Panc1 (cell line): ENCODE measurements at regions of chr13 and their contacts with region 1.

Region 1: DNA sequence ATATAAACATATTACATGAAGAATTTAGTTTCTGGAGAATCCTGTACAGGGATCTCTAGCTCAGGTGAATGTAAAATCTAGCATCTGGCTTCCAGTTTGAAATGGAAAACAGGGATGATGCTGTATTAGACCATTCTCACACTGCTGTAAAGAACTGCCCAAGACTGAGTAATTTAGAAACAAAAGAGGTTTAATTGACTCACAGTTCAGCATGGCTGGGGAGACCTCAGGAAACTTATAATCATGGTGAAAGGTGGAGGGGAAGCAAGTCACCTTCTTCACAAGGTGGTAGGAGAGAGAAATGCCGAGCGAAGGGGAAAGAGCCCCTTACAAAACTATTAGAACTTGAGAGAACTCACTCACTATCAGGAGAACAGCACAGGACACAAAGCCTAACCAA is 17.0 kb upstream of the N4BP2L2 start:
- DNase-seq: no peak
- ATAC-seq: no peak
- H3K4me3 ChIP-seq: no peak overlapping the region
- H3K27ac ChIP-seq: no peak overlapping the region
- H3K4me1 ChIP-seq: no peaks in the 10 kb centered on the region
- H3K27me3 ChIP-seq: no peaks in the 10 kb centered on the region
- CTCF ChIP-seq: no peak

Region 2: GRCh38 chr13:32415019-32415418 is 140.6 kb before region 1 on chr13:
- CTCF ChIA-PET with region 1: no interaction called
- POLR2A ChIA-PET with region 1: no interaction called
- in situ Hi-C with region 1: no loop called
- intact Hi-C with region 1: no loop called
- DNase-seq: no peak
- ATAC-seq: 0 out of 2 replicates have a peak, but pooled peaks have one; percentile 48
- H3K4me3 ChIP-seq: no peak overlapping the region
- H3K27ac ChIP-seq: no peak overlapping the region
- H3K4me1 ChIP-seq: no peaks in the 10 kb centered on the region
- H3K27me3 ChIP-seq: no peaks in the 10 kb centered on the region
- CTCF ChIP-seq: peak; percentile 69

Region 3: GRCh38 chr13:32474999-32475792 is 80.4 kb before region 1 on chr13:
- CTCF ChIA-PET with region 1: no interaction called
- POLR2A ChIA-PET with region 1: no interaction called
- in situ Hi-C with region 1: no loop called
- intact Hi-C with region 1: no loop called
- DNase-seq: no peak
- ATAC-seq: no peak
- H3K4me3 ChIP-seq: no peak overlapping the region
- H3K27ac ChIP-seq: no peak overlapping the region
- H3K4me1 ChIP-seq: no peaks in the 10 kb centered on the region
- H3K27me3 ChIP-seq: no peaks in the 10 kb centered on the region
- CTCF ChIP-seq: no peak

Region 4: GRCh38 chr13:32581177-32581786 is 25.7 kb after region 1 on chr13:
- CTCF ChIA-PET with region 1: no interaction called
- POLR2A ChIA-PET with region 1: interaction called, 11 read pairs
- in situ Hi-C with region 1: no loop called
- intact Hi-C with region 1: no loop called
- DNase-seq: no peak
- ATAC-seq: no peak
- H3K4me3 ChIP-seq: no peak overlapping the region
- H3K27ac ChIP-seq: no peak overlapping the region
- H3K4me1 ChIP-seq: peaks cover 4% of the 10 kb centered on the region
- H3K27me3 ChIP-seq: no peaks in the 10 kb centered on the region
- CTCF ChIP-seq: peak; percentile 57; the same call in 1 of the 2 replicates